ENCODE measurements at regions of chr14 and their contacts with region 1.

Region 1: DNA sequence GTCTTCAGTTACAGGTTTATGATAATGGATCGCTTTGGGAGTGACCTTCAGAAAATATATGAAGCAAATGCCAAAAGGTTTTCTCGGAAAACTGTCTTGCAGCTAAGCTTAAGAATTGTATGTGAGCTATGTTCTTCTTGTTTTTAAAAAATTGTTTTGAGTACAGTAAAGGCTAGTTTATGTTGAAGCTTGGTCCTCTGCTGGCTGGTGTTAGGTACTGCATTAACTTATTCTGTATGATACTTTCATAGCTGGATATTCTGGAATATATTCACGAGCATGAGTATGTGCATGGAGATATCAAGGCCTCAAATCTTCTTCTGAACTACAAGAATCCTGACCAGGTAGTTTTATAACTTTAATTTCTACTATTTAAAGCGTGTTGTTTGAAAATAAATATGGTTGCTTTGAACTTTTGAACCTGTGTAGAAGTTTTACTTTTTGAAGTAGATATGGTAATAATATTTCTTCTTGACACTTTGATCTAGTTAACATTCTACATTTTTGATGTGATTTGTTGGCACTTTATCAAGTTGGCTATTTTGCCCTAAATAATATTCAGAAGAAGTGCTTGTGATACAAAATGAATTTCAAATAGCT is 55.7 kb downstream of the VRK1 start:
- DNase-seq: peak; percentile 34
- H3K4me3 ChIP-seq: no peak overlapping the region
- H3K27ac ChIP-seq: no peak overlapping the region
- H3K27me3 ChIP-seq: no peaks in the 10 kb centered on the region
- CTCF ChIP-seq: peak; percentile 79

Region 2: GRCh38 chr14:96574633-96575632 is 278.0 kb before region 1 on chr14:
- CTCF ChIA-PET with region 1: interaction called, 20 read pairs
- POLR2A ChIA-PET with region 1: no interaction called
- DNase-seq: peak; percentile 52
- H3K4me3 ChIP-seq: no peak overlapping the region
- H3K27ac ChIP-seq: no peak overlapping the region
- H3K27me3 ChIP-seq: no peaks in the 10 kb centered on the region
- CTCF ChIP-seq: no peak

Region 3: GRCh38 chr14:96762650-96763049 is 90.3 kb before region 1 on chr14:
- CTCF ChIA-PET with region 1: interaction called, 10 read pairs
- POLR2A ChIA-PET with region 1: no interaction called
- DNase-seq: no peak
- H3K4me3 ChIP-seq: no peak overlapping the region
- H3K27ac ChIP-seq: no peak overlapping the region
- H3K27me3 ChIP-seq: no peaks in the 10 kb centered on the region
- CTCF ChIP-seq: no peak

Region 4: GRCh38 chr14:96805956-96806355 is 47.0 kb before region 1 on chr14:
- CTCF ChIA-PET with region 1: interaction called, 38 read pairs
- POLR2A ChIA-PET with region 1: no interaction called
- DNase-seq: no peak
- H3K4me3 ChIP-seq: no peak overlapping the region
- H3K27ac ChIP-seq: no peak overlapping the region
- H3K27me3 ChIP-seq: no peaks in the 10 kb centered on the region
- CTCF ChIP-seq: no peak

Region 5: DNA sequence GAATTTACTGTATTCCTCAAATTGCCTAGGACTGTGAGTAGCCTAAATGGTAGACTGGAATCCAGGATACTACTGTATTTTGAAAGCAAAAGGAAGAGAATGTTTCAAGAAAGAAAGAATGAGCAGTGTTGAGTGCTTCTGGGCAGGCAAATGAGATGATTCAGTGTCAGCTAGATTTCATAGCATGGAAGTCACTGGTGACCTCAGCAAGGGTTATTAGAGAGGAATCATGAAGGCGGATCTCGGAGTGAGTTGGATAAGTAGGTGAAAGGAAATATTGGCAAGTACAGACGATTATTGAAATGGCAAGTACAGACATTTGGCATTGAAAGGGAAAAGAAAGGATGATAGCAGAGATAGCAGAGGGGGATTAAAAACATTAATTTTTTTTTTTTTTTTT is 28.6 kb before region 1 on chr14:
- CTCF ChIA-PET with region 1: interaction called, 38 read pairs
- POLR2A ChIA-PET with region 1: no interaction called
- DNase-seq: peak; percentile 23
- H3K4me3 ChIP-seq: peak overlapping the region; percentile 14; the same call in 1 of the 2 replicates
- H3K27ac ChIP-seq: no peak overlapping the region
- H3K27me3 ChIP-seq: no peaks in the 10 kb centered on the region
- CTCF ChIP-seq: no peak

Measured in AG04450 (cell line).